ENCODE measurements at regions of chr5 and their contacts with region 1.

Region 1: GRCh38 chr5:51382763-51383490 is at the start of gene ISL1:
- DNase-seq: peak; percentile 88
- H3K4me3 ChIP-seq: peak within 1 kb of the TSS; percentile 83 to 86
- H3K27ac ChIP-seq: peak within 1 kb of the TSS; percentile 88 to 100
- H3K4me1 ChIP-seq: peaks cover 3 to 10% of the 10 kb centered on the region in 2 experiments; a peak in 3 of 4 replicates
- H3K27me3 ChIP-seq: no peaks in the 10 kb centered on the region
- CTCF ChIP-seq: peak; percentile 14; the same call in 1 of the 2 replicates
- EP300 ChIP-seq: no peak; a peak in 1 of 4 replicates
- RAD21 ChIP-seq: peak; percentile 14; the same call in 1 of the 2 replicates
- polyA plus RNA-seq, gene ISL1: 15.2 and 15.5 TPM in 2 replicates

Region 2: DNA sequence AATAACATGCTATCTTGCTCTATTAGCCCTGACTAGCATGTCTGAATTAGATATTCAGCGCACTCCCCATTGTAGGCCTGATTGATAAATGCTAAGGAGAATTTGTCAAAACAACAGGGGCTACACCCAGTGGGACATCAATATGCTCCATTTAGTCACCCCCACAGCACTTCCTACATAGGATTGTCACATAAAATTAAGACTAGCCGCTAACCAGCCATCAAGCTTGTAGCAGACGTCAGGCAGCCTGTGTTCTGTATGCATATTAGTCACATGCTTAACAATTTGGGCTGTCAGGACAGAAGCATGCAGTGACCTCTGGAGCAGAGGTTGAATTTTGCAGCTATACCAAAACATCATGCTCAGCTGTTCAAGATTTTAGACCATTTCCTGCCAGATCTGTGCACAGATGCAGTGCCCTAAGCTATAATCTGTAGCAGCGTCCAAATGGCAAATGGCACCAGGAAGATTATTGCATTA is 197.0 kb before region 1 on chr5:
- CTCF ChIA-PET with region 1: interaction called, 8 read pairs
- POLR2A ChIA-PET with region 1: interaction called, 13 read pairs
- DNase-seq: peak; percentile 41
- H3K4me3 ChIP-seq: no peak overlapping the region
- H3K27ac ChIP-seq: peak overlapping the region in 1 of 2 experiments; percentile 98; a peak in 2 of 4 replicates
- H3K4me1 ChIP-seq: peaks cover 0 to 20% of the 10 kb centered on the region in 2 experiments; a peak in 2 of 4 replicates
- H3K27me3 ChIP-seq: no peaks in the 10 kb centered on the region
- CTCF ChIP-seq: no peak
- EP300 ChIP-seq: peak in 1 of 2 experiments; percentile 98; a peak in 2 of 4 replicates
- RAD21 ChIP-seq: peak; percentile 64

Region 3: DNA sequence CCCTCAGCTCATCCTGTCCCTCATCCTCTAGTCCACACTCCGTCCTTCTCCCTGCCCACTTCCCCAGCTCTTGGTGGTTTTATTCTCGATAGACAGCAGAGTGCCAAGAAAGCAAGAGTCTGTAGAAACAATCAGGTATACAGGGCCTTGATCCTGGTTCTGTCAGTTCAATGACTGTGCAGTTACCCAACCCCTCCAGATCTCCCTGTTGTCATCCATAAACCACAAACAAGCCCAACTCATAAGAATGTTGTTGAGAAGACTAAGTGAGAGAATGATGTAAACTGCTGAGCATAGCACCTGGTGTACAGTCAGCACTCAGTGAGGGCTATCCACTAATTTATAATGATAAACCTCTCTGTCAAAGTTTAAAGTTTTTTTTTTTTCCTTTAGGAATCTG is 31.6 kb after region 1 on chr5:
- CTCF ChIA-PET with region 1: interaction called, 3 read pairs
- POLR2A ChIA-PET with region 1: interaction called, 11 read pairs
- DNase-seq: no peak
- H3K4me3 ChIP-seq: no peak overlapping the region
- H3K27ac ChIP-seq: peak overlapping the region in 1 of 2 experiments; percentile 43; a peak in 2 of 4 replicates
- H3K4me1 ChIP-seq: peaks cover 8 to 47% of the 10 kb centered on the region in 2 experiments; a peak in 2 of 4 replicates
- H3K27me3 ChIP-seq: no peaks in the 10 kb centered on the region
- CTCF ChIP-seq: no peak
- EP300 ChIP-seq: no peak
- RAD21 ChIP-seq: no peak

Region 4: GRCh38 chr5:51960617-51961115 is 577.7 kb after region 1 on chr5:
- CTCF ChIA-PET with region 1: interaction called, 3 read pairs
- POLR2A ChIA-PET with region 1: interaction called, 10 read pairs
- DNase-seq: peak; percentile 12
- H3K4me3 ChIP-seq: no peak overlapping the region
- H3K27ac ChIP-seq: peak overlapping the region in 1 of 2 experiments; percentile 99; a peak in 2 of 4 replicates
- H3K4me1 ChIP-seq: peaks cover 0 to 14% of the 10 kb centered on the region in 2 experiments; a peak in 3 of 4 replicates
- H3K27me3 ChIP-seq: no peaks in the 10 kb centered on the region
- CTCF ChIP-seq: peak; percentile 86
- EP300 ChIP-seq: peak; percentile 36 to 90; a peak in 3 of 4 replicates
- RAD21 ChIP-seq: peak; percentile 93

Region 5: DNA sequence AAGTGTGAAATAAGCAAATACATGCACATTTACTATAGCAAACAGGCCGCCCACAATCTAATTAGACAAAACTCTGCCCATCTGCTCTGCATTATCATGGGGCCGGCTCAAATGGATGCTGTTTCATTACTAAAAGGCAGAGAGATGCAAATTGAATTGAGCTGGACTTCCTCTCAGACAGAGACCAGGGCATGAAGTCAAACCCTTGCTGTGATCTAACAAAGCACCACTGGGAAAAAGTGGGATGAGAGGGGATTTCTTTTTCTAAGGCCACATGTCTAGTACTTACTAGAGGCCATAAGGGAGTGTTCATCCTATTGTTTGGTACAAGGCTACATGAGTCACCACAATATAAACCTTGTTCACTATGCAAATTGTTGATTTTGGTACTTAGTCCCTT is 615.0 kb after region 1 on chr5:
- CTCF ChIA-PET with region 1: interaction called, 6 read pairs
- POLR2A ChIA-PET with region 1: interaction called, 29 read pairs
- DNase-seq: peak; percentile 79
- H3K4me3 ChIP-seq: no peak overlapping the region
- H3K27ac ChIP-seq: peak overlapping the region in 1 of 2 experiments; percentile 100; a peak in 3 of 4 replicates
- H3K4me1 ChIP-seq: peaks cover 0 to 41% of the 10 kb centered on the region in 2 experiments; a peak in 2 of 4 replicates
- H3K27me3 ChIP-seq: no peaks in the 10 kb centered on the region
- CTCF ChIP-seq: no peak
- EP300 ChIP-seq: peak in 1 of 2 experiments; percentile 99; a peak in 2 of 4 replicates
- RAD21 ChIP-seq: peak; percentile 39; the same call in 1 of the 2 replicates

Measured in SK-N-SH (cell line).